ENCODE measurements at regions of chr9 and their contacts with region 1.

Region 1: DNA sequence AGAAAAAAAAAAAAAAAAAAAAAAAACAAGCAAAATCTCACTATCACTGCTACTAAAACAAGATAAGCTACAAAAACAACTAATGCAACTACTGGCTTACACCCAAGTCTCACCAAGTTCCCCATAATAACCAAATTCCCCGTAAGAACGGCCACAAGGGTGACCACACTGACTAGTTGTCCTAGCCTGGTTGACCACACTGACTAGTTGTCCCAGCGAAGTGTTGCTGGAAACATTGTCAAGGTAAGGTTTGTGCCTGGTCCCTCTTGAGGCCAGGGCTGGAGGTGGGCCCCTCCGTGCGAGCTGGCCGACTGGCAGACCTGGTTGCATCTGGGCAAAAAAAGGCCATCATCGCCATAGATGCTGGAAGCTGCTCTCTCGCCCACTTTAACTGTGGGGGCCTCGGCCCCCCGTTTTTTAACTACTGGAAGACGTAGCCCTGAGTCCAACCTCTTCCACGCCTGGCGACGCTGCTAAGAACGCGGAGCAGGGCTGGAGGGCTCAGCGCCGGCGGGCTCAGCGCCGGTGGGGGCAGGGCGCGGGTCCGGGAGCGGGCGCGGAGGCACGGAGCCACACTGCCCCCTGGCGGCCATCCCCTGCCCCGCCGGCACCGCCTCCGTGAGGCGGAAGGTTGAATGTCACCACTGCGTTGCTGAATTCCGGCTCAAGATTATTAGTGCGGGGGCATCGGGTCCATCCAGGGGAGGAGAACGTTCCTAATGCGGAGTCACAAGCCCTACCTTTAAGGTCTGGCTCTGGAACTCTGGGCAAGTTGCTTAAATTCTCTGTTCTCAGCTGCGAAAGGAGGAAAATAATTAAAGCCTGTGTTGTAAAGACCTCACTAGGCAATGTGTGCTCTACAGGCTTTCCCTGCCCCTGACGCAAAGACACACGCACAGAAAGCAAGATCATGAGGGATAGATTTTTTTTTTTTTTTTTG is 84.0 kb downstream of the HSD17B3 start:
- DNase-seq: peak; percentile 89
- ATAC-seq: peak; percentile 93

Region 2: DNA sequence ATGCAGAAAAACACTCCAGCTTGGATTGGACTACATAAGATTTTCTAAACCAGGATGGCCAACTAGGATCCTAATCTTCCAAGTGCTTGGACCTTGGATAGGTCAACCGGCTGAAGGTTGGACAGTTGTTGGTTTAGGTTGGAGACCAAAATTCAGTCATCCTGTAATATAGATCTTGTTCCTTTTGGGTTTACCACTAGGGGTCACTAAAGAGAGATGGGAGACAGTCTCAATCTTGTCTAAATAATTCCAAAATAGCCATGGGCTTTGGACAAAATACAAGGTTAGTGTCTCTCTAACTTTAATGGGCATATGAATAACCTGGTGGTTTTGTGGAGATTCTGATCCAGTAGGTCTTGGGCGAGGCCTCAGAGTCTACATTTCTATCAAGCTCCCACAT is 491.3 kb before region 1 on chr9:
- intact Hi-C with region 1: loop called (anchors 10 kb)
- DNase-seq: no peak
- ATAC-seq: peak; percentile 77